Adrenal gland (tissue), 19 donors: ENCODE measurements at regions of chr2 and their contacts with region 1.

Region 1: DNA sequence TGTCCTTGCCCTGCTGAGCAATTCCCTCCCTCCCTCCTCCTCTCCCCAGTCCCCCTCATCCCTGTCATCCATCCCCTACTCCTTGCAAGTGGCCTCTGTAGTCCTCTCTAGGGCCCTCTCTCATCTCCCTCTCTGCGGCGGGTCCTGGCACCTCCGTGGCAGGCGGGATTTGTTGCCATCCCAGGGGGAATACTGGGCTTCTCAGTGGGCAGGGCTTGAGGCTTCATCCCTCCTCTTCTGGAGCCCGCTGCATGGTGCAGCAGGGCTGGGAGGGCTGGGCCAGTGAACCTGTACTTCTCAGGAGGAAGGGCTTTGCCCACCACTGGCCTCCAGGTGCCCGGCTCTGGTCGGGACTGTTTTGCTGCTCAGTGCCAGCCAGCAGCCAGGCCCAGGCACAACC is 216.2 kb downstream of the TFCP2L1 start:
- DNase-seq: no peak
- H3K4me3 ChIP-seq: no peak overlapping the region
- H3K27ac ChIP-seq: no peak overlapping the region
- H3K4me1 ChIP-seq: no peaks in the 10 kb centered on the region
- H3K27me3 ChIP-seq: no peaks in the 10 kb centered on the region
- CTCF ChIP-seq: no peak
- POLR2A ChIP-seq: no peak

Region 2: DNA sequence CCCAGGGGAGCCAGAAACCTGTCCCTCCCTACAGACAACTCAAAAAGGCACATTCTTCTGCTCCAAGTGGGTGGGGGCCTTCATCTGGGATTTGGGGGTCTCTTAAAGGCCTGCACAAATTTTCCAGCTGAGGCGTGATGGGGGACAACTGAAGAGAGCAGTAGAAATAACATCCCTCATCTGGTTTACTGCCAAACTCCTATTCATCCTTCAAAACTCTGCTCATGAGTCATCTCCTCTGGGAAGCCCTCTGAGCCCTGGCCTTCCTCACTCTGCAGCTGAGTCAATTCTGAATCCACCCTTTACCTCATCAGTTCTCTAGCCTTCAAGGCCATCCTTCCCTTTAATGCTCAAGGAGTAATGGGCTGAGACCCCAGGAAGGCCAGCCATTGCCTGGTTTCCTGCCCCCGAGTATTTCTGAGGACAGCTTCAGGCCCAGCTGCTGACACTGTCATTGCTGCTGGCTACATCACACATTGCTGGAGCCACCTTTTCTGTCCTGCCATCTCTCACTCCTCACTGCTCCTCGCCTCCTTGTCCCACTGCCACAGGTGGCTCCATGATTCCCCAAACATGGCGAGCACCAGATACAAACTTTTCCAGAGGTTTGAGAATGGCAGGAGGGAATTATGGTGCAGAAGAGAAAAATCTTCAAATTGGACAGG is 365.4 kb before region 1 on chr2:
- intact Hi-C with region 1: loop called in 1 of 2 experiments (anchors 2 kb)
- DNase-seq: no peak
- H3K4me3 ChIP-seq: no peak overlapping the region
- H3K27ac ChIP-seq: no peak overlapping the region
- H3K4me1 ChIP-seq: no peaks in the 10 kb centered on the region
- H3K27me3 ChIP-seq: no peaks in the 10 kb centered on the region
- CTCF ChIP-seq: no peak
- POLR2A ChIP-seq: no peak

Region 3: DNA sequence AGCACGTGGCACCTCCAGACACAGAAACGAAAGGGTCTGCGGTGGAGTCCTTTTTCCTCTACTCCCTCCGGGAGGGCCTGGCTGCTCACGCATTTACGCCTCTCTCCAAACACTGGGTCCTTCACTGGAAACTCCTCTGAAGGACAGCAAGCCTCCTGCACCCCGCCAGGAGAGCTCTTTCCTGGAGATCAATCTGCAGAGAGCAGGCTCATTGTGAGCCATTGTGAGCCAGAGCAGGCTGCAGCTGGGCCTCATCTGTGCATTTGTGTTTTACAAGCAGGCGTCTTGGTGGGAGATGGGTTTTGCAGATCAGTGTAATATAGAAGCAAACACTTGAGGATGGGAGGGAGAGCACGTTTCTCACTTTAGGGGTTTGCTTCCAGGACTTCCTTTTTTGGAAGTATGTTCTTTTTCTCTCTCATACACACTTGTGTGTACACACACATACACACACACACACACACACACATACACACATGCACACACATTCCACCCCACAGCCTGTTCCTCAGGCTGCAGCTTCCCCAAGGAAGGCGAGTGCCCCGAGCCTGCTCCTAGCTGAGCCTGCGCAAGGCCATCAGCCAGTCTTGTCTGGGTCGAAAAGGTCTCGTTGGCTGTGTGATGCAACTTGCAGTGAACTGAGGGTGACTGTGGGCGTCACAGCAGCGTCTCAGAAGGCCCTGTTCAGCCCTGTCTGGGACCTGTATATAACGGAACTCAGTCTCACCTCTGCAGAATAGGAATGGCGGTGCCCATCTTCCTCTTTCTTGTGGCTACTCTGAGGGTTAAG is 169.7 kb before region 1 on chr2:
- intact Hi-C with region 1: no loop called
- DNase-seq: peak in 4 of 7 donors; percentile 24 to 69 (median 35)
- H3K4me3 ChIP-seq: no peak overlapping the region
- H3K27ac ChIP-seq: peak overlapping the region in 1 of 5 donors; percentile 16
- H3K4me1 ChIP-seq: peaks cover 8 to 10% of the 10 kb centered on the region in 2 donors
- H3K27me3 ChIP-seq: no peaks in the 10 kb centered on the region
- CTCF ChIP-seq: no peak
- POLR2A ChIP-seq: no peak

Region 4: GRCh38 chr2:121220995-121221394 is 152.1 kb after region 1 on chr2:
- intact Hi-C with region 1: no loop called
- DNase-seq: no peak
- H3K4me3 ChIP-seq: no peak overlapping the region
- H3K27ac ChIP-seq: no peak overlapping the region
- H3K4me1 ChIP-seq: no peaks in the 10 kb centered on the region
- H3K27me3 ChIP-seq: no peaks in the 10 kb centered on the region
- CTCF ChIP-seq: no peak
- POLR2A ChIP-seq: no peak